Pancreas (tissue), 10 donors: ENCODE measurements at regions of chr7 and their contacts with region 1.

Region 1: DNA sequence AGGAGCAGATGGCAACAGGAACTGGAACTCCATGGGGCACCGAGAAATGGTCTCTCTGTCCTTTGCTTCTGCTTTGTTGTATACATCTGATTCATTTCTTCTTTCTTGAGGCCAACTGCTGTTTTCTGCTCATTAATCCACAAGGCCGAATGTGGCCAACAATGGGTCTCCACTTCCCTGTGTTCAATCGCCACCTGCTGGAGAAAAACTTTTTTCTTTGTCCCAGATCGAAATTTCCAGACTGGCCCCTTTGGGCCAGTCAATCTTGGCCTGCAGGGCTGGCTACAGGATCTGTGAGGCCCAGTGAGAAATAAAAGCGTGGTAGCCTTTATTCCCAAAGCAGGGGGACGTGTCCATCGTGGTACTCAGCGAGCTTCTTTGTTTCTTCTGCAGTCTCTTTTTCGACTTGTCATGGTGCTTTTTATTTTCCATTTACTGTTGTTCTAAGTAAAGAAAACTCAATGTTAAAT is 58.8 kb downstream of the PARP12 start:
- DNase-seq: peak in 2 of 6 donors; percentile 17 to 33
- ATAC-seq: peak in 2 of 4 donors; percentile 17 to 31
- H3K4me3 ChIP-seq: no peak overlapping the region
- H3K27ac ChIP-seq: no peak overlapping the region
- H3K4me1 ChIP-seq: peaks cover 0 to 5% (median 0%) of the 10 kb centered on the region in 3 donors
- H3K27me3 ChIP-seq: no peaks in the 10 kb centered on the region
- CTCF ChIP-seq: peak in 1 of 4 donors; percentile 28

Region 2: DNA sequence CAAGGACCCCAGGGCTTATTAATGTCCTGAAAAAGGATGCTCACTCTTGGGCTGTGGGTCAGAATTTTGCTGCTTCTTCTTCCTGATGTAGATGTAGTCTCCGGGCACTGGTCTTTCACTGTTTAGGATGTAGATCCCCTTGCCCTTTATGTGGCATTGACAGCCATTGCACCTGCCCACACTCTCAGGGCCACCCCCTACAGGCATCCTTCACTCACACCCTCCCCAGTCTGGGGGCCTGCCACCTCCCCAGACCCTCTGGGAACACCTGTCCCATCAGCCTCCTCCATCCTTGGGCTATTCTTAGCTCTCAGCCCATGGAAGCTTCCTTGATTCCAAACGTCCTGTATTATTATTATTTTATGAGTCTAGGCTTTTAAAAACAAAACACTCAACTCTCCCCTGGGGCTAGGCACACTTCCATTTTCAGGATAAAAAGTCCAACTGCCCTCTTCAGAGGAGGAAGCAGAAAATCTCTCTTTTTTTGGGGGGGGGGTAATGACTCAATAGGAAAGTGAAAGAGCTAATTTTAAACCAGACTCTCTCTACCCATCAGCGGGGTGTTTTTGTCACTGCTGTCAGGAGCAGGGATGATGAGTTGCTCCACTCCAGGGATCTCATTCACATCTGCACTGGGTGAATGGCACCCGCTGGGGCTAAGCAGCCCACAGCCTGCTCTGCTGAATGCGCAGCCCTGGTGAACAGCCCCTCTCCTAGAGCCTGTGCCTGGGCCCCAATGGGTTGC is 508.9 kb before region 1 on chr7:
- intact Hi-C with region 1: loop called in 1 of 3 experiments (anchors 10 kb)
- DNase-seq: no peak
- ATAC-seq: no peak
- H3K4me3 ChIP-seq: no peak overlapping the region
- H3K27ac ChIP-seq: no peak overlapping the region
- H3K4me1 ChIP-seq: peaks cover 0 to under 1% (median 0%) of the 10 kb centered on the region in 3 donors
- H3K27me3 ChIP-seq: no peaks in the 10 kb centered on the region
- CTCF ChIP-seq: no peak

Region 3: DNA sequence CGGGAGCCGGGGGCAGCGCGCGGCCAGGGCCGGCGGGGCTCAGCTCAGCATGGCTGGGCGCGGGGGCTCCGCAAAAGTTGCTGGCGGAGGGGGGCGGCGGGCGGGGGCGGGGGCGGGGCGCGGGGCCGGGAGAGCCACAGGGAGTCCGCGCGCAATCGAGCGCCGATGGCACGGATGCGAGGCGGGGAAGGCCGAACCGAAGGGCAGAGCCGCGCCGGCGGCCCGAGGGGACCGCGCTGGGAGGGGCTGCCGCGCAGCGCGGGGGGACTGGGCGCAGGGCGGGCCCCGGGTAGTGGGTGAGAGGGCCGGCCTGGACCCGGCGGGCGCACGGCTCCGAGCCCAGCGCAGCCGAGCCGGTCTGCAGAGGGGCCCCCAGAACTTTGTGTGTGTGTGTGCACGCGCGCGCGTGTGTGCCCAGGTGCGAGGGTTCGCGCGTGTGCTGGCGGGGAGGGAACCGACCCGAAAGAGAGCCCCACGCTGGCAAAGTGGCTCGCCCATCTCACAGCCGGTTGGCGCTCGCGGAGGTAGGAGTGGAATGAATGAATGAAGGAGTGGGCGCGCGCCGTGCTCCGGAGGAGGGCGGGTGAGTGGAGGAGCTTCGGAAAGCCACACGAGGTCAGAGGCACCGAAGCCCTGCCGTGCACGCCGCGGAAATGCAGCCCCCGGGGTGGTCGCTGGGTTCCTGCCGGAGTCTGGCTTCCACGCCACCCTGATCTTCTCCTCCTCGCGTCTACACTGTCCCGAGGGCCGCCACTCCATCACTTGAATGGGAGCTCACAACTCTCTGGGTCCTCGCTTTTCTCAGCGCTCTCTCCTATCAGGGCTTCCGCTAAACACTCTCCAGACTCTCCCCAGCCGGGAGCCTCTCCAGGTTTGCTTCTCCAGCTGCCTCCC is 225.8 kb before region 1 on chr7 and contains the start of gene HIPK2:
- intact Hi-C with region 1: loop called in 2 of 3 experiments (anchors 10 kb)
- DNase-seq: peak; percentile 67 to 88 (median 80)
- ATAC-seq: peak; percentile 72 to 85 (median 74)
- H3K4me3 ChIP-seq: peak within 1 kb of the TSS; percentile 49 to 93 (median 88)
- H3K27ac ChIP-seq: peak within 1 kb of the TSS; percentile 57 to 92 (median 80)
- H3K4me1 ChIP-seq: peaks cover 5 to 21% (median 13%) of the 10 kb centered on the region in 3 donors
- H3K27me3 ChIP-seq: no peaks in the 10 kb centered on the region
- CTCF ChIP-seq: no peak
- total RNA-seq, gene HIPK2: 21.4 to 49.0 (median 26.5) TPM

Region 4: GRCh38 chr7:139842401-139843210 is 161.3 kb before region 1 on chr7:
- intact Hi-C with region 1: no loop called
- DNase-seq: no peak
- ATAC-seq: no peak
- H3K4me3 ChIP-seq: no peak overlapping the region
- H3K27ac ChIP-seq: no peak overlapping the region
- H3K4me1 ChIP-seq: no peaks in the 10 kb centered on the region
- H3K27me3 ChIP-seq: no peaks in the 10 kb centered on the region
- CTCF ChIP-seq: no peak

Region 5: DNA sequence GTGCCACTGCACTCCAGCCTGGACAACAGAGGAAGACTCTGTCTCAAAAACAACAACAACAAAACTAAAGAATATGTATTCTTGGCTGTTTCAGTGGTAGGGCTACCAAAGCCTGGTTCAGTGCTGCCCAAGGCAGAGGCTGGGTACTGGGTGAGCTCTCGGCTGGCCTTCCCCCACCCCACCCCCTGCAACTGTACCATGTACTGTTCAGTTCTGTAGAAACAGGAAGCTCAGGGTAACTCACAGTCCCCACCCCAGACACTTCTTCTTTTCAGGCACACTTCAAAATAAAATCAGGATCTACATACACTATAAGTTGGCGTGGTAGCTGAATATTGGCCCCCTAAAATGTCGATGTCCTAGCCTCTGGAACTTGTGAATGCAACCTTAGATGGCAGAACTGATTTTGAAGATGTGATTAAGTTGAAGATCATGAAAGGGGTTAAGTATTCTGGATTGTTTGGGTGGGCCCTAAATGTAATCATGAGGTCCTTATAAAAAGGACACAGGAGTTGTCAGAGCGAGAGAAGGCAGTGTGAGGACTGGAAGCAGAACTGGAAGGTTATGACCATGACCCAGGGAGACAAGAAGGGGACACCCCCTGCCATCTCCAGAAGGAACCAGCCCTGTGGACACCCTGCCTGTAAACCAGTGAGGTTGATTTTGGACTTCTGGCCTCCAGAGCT is 143.7 kb before region 1 on chr7:
- intact Hi-C with region 1: no loop called
- DNase-seq: peak in 1 of 6 donors; percentile 40
- ATAC-seq: peak in 3 of 4 donors; percentile 40 to 81 (median 64)
- H3K4me3 ChIP-seq: no peak overlapping the region
- H3K27ac ChIP-seq: no peak overlapping the region
- H3K4me1 ChIP-seq: no peaks in the 10 kb centered on the region
- H3K27me3 ChIP-seq: no peaks in the 10 kb centered on the region
- CTCF ChIP-seq: no peak

Region 6: DNA sequence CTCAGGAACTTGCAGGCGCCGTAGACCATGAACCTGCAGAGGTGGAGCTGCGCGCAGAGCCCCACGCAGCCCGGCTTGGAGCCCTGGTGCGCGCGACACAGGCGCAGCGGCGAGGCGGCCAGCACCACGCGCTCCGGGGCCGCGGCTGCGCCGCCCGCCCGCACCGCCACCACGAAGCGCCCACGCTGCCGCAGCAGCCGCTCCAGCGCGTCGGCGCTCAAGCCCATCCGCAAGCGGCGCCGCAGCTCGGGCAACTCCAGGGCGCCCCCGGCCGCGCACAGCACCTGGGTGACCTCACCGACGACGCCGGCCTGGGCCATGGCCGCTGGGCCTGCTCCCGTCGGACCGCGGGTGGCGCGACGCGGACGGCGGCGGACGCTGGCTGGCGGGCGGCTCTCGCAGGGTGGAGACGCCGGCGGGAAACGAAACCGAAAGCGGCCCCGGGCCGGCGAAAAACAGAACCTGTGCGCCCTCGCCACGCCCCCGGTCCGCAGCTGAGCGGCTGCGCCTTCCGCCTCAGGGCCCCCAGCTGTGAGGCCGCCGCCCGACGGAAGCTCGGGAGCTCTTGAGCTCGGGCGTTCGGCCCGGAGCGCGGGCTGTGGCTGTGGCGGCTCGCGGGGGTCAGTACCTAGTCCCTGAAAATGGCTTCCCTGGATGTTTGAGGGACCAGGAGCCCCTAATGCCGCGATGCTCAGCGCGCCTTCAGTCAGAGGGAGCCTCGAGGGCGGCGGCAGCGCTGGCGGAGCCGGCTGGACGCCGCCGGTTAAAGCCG is 58.8 kb after region 1 on chr7 and contains the start of gene PARP12:
- intact Hi-C with region 1: no loop called
- DNase-seq: peak; percentile 86 to 95 (median 91)
- ATAC-seq: peak; percentile 72 to 85 (median 80)
- H3K4me3 ChIP-seq: peak within 1 kb of the TSS; percentile 62 to 70 (median 66)
- H3K27ac ChIP-seq: peak within 1 kb of the TSS; percentile 90 to 96 (median 92)
- H3K4me1 ChIP-seq: peaks cover 12 to 32% (median 24%) of the 10 kb centered on the region in 3 donors
- H3K27me3 ChIP-seq: no peaks in the 10 kb centered on the region
- CTCF ChIP-seq: no peak
- total RNA-seq, gene PARP12: 10.8 to 34.8 (median 21.3) TPM

Region 7: DNA sequence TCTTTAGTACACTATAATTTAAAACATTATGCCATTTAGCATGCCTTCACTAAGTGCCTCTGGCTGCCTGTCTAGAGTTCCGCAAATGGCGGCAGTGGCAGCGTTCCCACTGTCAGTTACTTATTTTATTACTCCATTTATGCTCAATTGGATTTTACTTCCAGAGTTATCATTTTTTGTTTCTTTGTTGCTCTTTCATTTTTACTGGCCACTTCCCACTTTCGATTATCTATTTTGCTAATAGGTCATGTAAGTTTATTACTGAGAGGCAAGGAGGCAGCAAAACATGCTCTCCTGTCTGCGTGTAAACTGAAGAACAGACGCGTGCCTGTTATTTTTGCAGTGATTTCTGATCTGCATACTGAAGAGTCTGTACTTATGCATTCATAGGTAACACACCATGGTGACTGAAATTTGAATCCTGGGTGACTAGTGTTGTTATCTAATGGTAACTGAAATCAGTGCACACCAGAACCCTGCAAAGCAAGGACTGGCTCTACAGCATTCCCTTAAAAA is 149.8 kb after region 1 on chr7:
- intact Hi-C with region 1: no loop called
- DNase-seq: no peak
- ATAC-seq: peak in 2 of 4 donors; percentile 18 to 30
- H3K4me3 ChIP-seq: no peak overlapping the region
- H3K27ac ChIP-seq: no peak overlapping the region
- H3K4me1 ChIP-seq: peaks cover 0 to 8% (median 0%) of the 10 kb centered on the region in 3 donors
- H3K27me3 ChIP-seq: no peaks in the 10 kb centered on the region
- CTCF ChIP-seq: no peak